ENCODE measurements at regions of chr16 and their contacts with region 1.

Region 1: DNA sequence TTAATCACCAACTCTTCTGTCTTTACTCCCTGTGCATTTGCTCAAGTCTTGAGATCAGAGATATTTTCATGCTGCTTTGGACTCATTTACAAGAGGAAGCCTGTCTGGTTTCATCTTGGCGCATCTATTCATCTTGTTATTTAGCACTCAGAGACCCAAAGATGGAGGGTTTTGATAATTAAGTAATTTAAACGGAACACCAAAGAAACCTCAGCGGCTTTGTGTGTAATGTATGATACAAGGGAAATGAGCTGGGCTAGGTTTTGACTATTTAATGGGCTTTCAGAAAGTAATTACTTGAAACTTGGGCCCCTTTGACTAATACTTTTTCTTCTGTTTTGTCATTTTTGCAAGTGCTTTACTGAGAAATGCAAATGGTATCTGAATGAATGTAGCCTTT is 66.2 kb upstream of the CACNG3 start:
- DNase-seq: peak; percentile 13
- H3K4me3 Mint-ChIP-seq: no peak overlapping the region
- H3K27ac Mint-ChIP-seq: peak overlapping the region; percentile 46
- H3K4me1 Mint-ChIP-seq: peaks cover 23% of the 10 kb centered on the region
- H3K27me3 Mint-ChIP-seq: no peaks in the 10 kb centered on the region

Region 2: DNA sequence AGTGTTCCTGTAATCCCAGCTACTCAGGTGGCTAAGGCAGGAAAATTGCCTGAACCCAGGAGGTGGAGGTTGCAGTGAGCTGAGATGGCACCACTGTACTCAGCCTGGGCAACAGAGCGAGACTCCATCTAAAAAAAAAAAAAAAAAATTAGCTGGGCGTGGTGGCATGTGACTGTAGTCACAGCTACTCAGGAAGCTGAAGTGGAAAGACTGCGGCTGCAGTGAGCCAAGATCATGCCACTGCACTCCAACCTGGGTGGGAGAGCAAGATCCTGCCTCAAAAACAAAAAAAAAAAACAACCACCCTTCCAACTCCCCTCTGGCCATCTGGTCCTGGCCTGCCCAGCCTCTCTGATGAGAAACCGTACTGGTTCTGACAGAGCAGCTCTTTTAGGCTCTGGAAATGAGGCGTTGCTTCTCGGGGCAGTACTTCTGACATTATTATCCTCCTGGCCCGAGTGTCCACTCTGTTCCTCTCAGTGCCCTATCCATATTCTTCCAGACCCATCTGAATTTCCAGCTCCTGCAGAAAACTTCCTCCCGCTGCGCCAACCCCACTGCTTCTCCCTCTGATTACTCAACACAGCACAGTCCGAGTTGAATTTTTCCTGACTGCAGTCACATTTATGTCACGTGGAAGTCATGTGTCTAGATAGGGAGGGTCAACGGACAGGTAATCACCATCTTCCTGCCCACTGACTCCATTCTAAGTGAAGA is 693.0 kb before region 1 on chr16:
- CTCF ChIA-PET with region 1: no interaction called
- intact Hi-C with region 1: no loop called
- DNase-seq: no peak
- H3K4me3 Mint-ChIP-seq: no peak overlapping the region
- H3K27ac Mint-ChIP-seq: no peak overlapping the region
- H3K4me1 Mint-ChIP-seq: peaks cover 19% of the 10 kb centered on the region
- H3K27me3 Mint-ChIP-seq: no peaks in the 10 kb centered on the region

Region 3: DNA sequence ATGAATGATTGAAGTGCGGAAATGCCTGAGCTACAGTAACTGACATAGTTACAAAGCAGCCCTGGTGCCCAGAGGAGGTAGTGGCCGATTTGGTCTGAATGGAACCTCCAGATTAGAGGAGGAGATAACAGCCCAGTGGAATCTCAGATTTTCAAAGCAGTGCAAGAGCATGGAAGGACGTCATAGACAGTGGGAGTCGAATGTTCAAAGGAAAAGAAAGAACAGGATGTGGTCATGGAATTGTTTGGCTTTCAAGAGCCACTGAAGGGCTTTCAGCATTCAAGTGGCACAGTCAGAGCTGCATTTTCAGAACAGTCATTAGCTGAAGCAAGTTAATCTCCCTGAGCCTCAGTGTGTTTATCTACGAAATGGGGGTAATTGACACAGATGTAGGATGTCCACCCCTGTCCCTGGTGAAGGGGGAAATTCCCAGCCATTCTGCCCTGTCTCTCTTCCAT is 38.4 kb before region 1 on chr16:
- CTCF ChIA-PET with region 1: interaction called, 3 read pairs
- intact Hi-C with region 1: loop called (anchors 5 kb)
- DNase-seq: peak; percentile 38
- H3K4me3 Mint-ChIP-seq: no peak overlapping the region
- H3K27ac Mint-ChIP-seq: peak overlapping the region; percentile 57
- H3K4me1 Mint-ChIP-seq: peaks cover 36% of the 10 kb centered on the region
- H3K27me3 Mint-ChIP-seq: no peaks in the 10 kb centered on the region